ENCODE measurements at regions of chr10 and their contacts with region 1.

Region 1: DNA sequence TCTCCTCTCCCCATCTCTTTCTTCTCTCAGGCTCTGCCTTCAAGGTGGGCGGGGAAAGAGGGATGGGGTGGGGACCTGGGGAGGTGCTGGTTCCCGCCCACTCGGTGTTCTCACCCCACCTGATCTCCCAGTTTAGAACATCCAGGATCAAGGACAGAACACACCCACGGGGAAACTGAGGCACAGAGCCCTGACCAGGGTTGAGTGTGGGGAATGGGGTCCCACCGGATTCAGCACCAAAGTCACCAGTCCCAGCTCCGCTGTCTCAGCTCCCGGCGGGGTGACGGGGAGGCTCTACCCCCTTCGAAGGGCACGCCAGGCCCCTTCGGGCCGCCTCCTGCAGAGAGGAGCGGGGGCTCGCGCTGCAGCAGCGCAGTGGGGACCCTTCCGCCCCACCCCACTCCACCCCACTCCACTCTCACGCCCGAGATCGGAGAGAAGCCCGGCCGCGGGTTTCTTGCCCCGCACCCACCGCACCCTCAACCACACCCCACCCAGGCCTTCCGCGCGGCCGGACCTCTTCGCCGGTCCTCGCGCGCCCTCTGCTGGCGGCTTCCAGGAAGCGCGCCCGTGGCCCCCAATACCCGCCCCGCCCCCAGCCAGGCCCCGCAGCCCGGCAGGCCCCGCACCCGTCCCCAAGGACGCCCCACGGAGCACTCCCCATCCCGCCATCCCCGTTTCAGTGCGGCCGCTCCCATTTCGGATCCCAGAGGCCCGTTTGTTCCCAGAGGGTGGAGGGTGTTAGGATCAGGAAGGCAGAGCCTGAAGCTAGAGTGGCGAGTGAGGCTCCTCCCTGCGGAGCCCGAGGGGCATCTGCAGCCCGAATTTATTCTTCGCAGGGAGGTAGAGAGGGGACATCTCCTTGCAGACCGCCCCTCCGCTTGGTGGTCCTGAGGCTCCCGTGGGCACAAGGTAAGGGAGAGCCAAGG is 18.0 kb downstream of the POLL start:
- DNase-seq: peak; percentile 84
- ATAC-seq: peak; percentile 92 to 94

Region 2: GRCh38 chr10:101161494-101162299 is 408.4 kb before region 1 on chr10:
- intact Hi-C with region 1: loop called in 1 of 2 experiments (anchors 10 kb)
- DNase-seq: peak; percentile 67
- ATAC-seq: peak; percentile 90 to 91

Region 3: GRCh38 chr10:101214446-101215396 is 355.4 kb before region 1 on chr10:
- intact Hi-C with region 1: loop called (anchors 2 to 5 kb)
- DNase-seq: peak; percentile 72
- ATAC-seq: peak; percentile 78 to 86

Region 4: DNA sequence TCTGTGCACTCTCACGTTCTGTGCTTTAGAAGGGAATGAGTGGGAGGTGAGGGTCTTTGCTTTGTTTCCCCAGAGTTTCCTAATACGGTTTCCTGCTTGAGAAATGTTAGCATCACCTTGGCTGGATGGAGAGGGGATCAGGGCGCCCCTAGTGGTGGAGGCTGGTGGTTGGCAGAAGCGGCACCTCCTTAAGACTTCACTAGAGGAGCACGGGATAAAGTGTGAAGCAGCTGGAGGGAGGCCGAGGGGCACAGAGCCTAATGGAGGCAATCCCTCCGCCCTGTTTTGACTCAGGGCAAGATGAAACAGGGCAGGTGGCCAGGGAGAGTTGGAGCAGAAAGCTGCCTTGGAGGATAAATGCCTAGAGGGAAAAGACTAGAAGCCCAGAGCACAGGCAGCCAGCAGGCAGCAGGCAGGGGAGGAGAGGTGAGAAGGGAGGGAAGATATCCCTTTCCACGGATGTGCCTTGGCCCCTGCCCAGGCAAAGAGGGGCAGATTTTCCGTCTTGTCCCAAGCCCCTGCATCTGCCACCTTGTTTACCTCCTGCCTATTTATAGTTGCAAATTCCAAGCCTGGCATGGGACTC is 272.1 kb before region 1 on chr10:
- intact Hi-C with region 1: loop called in 1 of 2 experiments (anchors 10 kb)
- DNase-seq: peak; percentile 66
- ATAC-seq: peak; percentile 66 to 72

Measured in left cardiac atrium (tissue), 4 donors.